Pancreas (tissue), 10 donors: ENCODE measurements at regions of chr6 and their contacts with region 1.

Region 1: GRCh38 chr6:1596088-1596852 is 13.4 kb upstream of the FOXC1 start:
- DNase-seq: peak; percentile 47 to 87 (median 76)
- ATAC-seq: peak; percentile 86 to 99 (median 96)
- H3K4me3 ChIP-seq: no peak overlapping the region
- H3K27ac ChIP-seq: no peak overlapping the region
- H3K4me1 ChIP-seq: no peaks in the 10 kb centered on the region
- H3K27me3 ChIP-seq: peaks cover 0 to 15% (median 1%) of the 10 kb centered on the region in 4 donors
- CTCF ChIP-seq: peak; percentile 84 to 94 (median 92)

Region 2: DNA sequence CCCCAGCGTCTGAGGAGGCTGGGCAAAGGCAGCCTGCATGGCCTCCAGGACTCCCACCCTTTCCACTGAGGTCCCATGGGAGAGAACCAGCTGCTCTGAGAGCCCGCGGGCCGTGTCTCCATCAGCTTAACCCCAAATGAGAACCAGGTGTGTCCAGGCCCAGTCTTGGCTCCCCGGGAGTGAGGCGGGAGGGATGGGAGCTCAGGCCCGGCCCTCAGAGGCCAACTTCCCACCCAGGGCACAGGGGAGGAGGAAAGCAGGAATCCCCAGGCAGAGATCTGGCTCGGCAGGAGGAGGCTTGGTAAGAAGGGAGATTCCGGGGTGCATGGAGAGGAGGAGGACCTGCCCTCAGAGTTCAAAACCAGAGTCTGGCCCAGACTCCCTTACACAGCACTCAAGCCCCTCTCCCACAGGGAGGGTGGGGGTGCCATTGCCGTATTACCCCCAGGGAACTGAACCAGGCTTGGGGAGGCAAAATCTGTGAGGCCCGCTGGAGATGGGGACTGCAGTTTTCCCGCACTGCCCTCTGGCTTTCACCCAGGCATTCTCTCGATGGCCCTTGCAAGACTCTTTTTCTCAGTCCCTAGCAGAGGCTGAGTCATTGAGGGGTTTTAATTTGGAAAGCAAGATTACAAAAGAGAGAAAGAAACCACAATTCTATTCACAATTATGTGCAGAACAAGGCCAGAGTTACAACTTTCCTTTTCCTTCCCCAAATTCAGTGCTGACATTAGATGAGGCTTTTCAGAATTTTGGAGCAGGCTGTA is 189.8 kb before region 1 on chr6:
- intact Hi-C with region 1: no loop called
- DNase-seq: peak in 1 of 6 donors; percentile 43
- ATAC-seq: peak in 1 of 4 donors; percentile 20
- H3K4me3 ChIP-seq: no peak overlapping the region
- H3K27ac ChIP-seq: no peak overlapping the region
- H3K4me1 ChIP-seq: no peaks in the 10 kb centered on the region
- H3K27me3 ChIP-seq: no peaks in the 10 kb centered on the region
- CTCF ChIP-seq: no peak

Region 3: DNA sequence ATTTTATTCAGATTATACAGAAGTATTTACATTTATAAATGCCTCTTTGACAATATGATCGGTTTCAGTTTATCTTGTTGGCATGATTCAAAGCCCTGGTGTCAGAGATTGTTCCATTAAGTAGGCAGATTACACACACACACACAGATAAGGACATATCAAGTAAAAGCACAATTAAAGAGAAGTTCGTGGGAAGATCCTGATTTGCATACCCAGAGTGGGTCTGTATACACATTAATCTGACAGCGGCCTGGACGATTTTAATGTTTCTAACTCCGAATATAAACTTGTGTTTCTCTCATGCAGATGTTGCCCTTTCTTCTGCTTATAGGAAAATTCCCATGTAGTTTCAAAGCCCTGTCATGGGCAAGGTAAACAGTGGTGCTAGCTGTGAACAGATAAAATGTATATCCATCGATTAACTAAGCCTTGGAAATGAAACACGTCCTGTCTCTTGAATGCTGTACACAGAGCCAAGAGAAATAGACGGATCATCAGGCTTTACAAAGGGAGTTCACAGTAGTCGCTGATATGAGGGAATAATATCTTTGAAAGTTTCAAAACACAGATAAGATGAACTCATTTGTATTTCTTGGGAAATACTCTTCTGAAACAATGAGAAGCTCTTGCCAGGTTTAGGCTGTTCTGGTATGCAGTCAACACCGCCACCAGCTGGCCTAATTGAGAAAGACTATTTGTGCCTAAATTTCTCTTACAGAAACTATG is 757.3 kb after region 1 on chr6:
- intact Hi-C with region 1: loop called in 2 of 3 experiments (anchors 5 to 10 kb)
- DNase-seq: peak in 5 of 6 donors; percentile 52 to 77 (median 62)
- ATAC-seq: peak; percentile 80 to 96 (median 92)
- H3K4me3 ChIP-seq: no peak overlapping the region
- H3K27ac ChIP-seq: peak overlapping the region in 2 of 4 donors; percentile 19 to 39
- H3K4me1 ChIP-seq: peaks cover 6 to 19% (median 7%) of the 10 kb centered on the region in 3 donors
- H3K27me3 ChIP-seq: no peaks in the 10 kb centered on the region
- CTCF ChIP-seq: peak; percentile 34 to 60 (median 49)

Region 4: DNA sequence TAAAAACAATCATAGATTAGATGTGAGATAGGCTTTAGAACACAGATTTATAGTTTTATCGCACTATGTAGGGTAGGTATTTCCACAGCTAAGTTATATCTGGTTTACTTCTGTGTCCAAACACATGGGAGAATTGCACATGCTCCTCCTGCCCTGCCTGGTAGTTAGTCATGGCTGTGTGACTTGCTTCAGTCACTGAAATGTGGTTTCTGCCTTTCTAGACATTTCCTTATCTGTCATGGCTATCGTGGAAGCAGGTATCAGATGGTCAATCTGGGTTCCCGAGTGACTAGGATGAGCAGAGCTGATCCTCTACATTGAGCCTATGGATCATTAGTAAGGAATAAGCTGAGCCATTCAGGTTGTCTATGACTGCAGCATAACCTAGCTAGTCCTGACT is 766.9 kb after region 1 on chr6:
- intact Hi-C with region 1: loop called (anchors 5 to 10 kb)
- DNase-seq: no peak
- ATAC-seq: no peak
- H3K4me3 ChIP-seq: no peak overlapping the region
- H3K27ac ChIP-seq: no peak overlapping the region
- H3K4me1 ChIP-seq: no peaks in the 10 kb centered on the region
- H3K27me3 ChIP-seq: no peaks in the 10 kb centered on the region
- CTCF ChIP-seq: no peak

Region 5: DNA sequence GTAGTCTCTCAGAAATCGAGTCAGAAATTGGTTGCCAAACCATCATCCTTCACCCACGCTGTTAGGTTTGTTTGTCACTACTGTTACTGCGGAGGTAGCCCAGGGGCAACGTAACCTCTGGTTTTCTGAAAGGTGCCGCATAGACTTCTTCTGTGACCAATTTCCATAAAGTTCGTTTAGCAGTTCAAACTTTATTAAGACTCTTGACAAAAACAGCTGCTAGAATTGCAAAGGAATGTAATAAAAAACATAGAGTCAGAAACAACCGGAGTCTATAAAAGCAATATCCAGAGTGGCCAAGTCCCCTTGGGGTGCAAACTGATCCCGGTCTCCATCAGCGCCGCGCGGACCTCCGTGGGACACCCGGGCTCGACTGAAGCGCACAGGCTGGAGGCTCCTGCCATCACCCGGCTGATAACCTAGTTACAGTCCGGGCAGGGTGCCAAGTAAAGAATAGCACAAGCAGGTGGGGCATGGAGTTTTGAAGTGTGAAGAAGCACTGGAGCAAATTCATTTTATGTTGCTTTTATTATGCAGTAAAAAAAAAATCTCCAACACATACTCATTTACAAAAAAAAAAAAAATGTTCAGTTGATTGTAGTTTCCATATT is 854.2 kb after region 1 on chr6:
- intact Hi-C with region 1: loop called in 1 of 3 experiments (anchors 10 kb)
- DNase-seq: peak in 5 of 6 donors; percentile 15 to 60 (median 45)
- ATAC-seq: peak; percentile 43 to 79 (median 70)
- H3K4me3 ChIP-seq: no peak overlapping the region
- H3K27ac ChIP-seq: no peak overlapping the region
- H3K4me1 ChIP-seq: no peaks in the 10 kb centered on the region
- H3K27me3 ChIP-seq: no peaks in the 10 kb centered on the region
- CTCF ChIP-seq: no peak

Region 6: DNA sequence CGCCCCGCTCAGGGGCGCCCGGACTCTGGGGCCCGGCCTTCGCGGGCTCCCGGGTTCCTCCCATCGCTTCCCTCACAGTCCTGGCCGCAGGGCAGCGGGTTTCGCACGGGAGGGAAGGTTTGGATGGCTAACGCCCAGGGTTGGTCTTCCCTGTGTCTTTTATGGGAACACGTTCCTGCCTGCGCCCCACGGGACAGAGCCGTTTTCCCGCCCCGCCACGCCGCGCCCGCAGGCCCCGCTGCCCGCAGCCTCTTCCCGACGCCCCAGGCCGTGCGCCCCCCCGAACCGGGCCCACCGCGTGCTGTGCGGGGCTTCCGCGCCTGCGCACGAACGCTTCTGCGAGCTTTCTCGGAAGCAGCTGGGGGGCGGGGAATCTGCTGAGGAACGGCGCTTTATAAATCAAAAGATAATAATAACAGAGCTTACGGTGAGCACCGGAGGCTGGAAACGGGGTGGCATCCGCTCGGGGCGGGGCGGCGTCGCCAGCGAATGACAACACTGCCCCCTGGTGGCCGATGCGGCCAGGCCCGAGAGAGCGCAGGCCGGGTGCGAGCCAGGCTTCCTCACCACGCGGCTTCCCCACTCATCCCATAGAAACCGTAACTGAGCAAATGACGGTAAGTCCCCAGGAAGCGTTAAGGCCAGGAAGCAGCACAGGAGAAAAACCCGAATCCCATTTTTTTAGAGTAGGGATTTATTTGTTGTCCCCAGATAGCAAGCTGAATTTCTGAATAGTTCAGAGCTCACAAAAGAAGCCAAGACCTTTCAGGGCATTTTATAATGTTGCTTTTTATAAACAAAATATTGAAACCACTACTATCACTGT is 1038.1 kb after region 1 on chr6:
- intact Hi-C with region 1: loop called (anchors 5 to 10 kb)
- DNase-seq: peak; percentile 53 to 97 (median 81)
- ATAC-seq: peak; percentile 87 to 96 (median 94)
- H3K4me3 ChIP-seq: peak overlapping the region; percentile 19 to 50 (median 32)
- H3K27ac ChIP-seq: peak overlapping the region in 1 of 4 donors; percentile 27
- H3K4me1 ChIP-seq: peaks cover 0 to 8% (median 3%) of the 10 kb centered on the region in 3 donors
- H3K27me3 ChIP-seq: no peaks in the 10 kb centered on the region
- CTCF ChIP-seq: peak; percentile 92 to 98 (median 96)

Region 7: GRCh38 chr6:2639896-2640295 is 1043.6 kb after region 1 on chr6:
- intact Hi-C with region 1: loop called (anchors 5 to 10 kb)
- DNase-seq: no peak
- ATAC-seq: no peak
- H3K4me3 ChIP-seq: no peak overlapping the region
- H3K27ac ChIP-seq: no peak overlapping the region
- H3K4me1 ChIP-seq: peaks cover 0 to under 1% (median 0%) of the 10 kb centered on the region in 3 donors
- H3K27me3 ChIP-seq: no peaks in the 10 kb centered on the region
- CTCF ChIP-seq: no peak